ENCODE measurements at regions of chr7 and their contacts with region 1.

Region 1: DNA sequence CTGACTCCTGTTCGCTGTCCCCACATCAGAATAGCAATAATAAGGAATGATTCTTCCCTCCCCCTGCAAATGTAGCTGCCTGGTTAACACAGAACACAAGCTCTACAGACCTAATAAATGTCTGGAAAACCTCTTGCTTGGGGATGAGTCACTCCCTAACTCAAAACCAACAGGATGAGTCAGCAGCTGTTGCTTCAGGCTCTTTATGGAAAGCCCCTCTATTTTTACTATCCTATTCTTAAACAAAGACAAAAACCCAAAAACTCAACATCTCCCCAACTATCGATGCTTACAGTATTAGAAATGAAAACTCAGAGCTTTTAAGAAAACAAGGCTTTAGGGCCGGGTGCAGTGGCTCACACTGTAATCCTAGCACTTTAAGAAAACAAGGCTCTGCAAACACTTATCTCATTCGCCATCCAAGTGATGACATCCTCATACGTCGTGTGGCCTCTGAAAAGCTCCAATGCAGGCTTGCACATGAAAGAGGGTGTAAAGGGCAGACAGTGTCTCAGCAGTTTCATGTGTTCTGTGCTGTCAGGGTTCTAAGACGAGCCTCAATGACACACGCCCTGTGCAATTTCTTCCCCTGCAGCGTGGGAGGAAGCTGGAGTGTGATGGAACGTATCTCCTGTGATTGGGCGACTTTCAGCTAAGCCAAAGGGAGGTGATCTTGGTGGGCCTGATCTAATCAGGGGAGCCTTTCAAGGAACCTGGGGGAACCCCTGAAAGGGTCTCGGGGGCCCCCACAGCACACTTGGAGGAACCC is 70.1 kb downstream of the AMZ1 start:
- DNase-seq: no peak

Region 2: DNA sequence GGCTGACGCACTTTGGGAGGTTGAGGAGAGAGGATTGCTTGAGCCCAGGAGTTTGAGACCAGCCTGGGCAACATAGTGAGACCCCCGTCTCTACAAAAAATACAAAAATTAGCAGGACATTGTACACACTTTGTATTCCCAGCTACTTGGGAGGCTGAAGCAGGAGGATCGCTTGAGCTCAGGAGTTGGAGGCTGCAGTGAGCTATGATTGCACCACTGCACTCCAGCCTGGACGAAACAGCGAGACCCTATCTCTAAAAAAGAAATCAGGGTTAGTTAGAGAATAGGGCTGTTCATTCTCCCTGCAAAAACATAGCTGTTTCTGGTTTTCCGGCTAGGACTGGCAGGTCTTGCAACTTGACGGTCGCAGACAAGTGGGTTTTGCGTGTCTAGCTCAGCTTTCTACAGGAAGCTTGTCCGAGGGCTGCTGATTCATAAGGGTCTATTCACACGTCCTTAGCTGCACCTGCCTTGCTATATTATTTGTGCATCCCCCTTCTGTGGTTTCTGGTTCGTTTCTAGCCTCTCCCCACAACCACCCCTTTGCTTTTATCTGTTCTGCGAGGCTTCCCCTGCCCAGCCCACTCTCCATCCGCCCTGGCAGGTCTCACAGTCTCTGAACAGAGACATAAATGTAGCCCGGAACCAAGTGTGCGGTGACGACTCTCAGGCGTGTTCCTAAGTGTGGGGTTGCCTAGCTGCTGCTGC is 59.4 kb before region 1 on chr7:
- intact Hi-C with region 1: no loop called
- DNase-seq: no peak

Region 3: DNA sequence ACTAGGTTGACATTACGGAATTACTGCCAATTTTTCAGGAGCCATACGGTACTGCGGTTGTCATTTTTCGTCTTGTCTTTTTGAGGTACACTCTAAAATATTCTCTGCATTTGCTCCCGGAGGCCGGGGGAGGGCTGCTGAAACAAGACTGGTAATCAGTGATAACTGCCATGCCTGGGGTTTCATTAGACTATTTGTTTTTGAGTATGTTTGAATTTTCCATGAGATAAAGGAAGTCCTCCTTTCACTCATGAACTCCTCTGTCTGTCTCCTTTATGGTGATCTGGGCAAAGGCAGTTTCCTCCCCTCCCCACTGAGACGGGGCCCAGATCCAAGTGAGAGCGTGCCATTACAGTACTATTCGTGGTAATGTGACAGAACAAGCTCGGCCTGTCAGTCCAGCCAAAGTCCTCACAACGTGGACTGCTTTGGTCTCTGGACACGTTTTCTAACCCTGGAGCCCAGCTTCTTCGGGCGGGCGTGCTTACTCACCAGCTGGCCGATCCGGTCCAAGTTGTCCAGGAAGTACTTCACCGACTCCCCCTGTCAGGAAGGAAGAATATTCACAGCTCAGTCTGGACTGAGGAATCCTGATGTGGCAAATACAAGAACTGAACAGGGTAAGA is 25.0 kb before region 1 on chr7:
- intact Hi-C with region 1: loop called (anchors 2 kb)
- DNase-seq: peak; percentile 86

Region 4: GRCh38 chr7:2785071-2785500 is 27.0 kb after region 1 on chr7:
- intact Hi-C with region 1: no loop called
- DNase-seq: no peak

Region 5: GRCh38 chr7:2811476-2812113 is 53.5 kb after region 1 on chr7:
- intact Hi-C with region 1: loop called (anchors 5 kb)
- DNase-seq: peak; percentile 75

Region 6: GRCh38 chr7:3065724-3066143 is 307.6 kb after region 1 on chr7:
- intact Hi-C with region 1: no loop called
- DNase-seq: no peak